Activated CD4-positive, alpha-beta T cell treated with anti-CD3 and anti-CD28 coated beads for 36 hours (primary cell): ENCODE measurements at regions of chr11 and their contacts with region 1.

Region 1: DNA sequence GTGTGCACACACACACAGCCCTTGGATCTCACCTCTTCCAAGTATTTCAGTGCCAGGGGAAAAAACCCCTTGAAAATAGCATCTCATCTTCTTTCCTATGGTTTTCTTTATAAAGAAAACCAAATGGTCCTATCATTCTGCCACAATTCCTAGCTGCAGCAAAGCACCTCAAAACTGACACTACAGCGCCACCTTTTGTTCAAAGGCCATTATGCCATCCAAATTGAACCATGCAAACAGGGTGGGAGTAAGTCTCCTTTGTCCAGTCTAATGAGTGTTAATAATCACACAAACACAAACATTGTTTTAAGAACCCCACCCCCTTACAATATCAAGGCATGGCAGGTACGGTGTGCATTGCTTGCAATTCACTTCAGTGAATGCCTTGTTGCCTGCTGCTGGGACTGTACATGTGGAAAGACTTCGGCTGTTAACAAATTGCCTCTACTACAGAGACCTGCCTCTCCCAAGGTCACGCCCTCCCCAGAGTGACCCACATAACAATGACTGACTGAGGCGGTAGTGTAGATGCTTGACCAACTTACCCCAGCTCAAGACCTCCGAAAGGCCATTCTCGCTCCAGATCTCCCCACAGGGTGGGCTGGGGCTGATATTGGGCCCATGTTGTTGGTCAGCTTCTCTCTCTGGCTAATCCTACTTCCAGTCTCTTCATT is 31.7 kb downstream of the FAM181B start:
- DNase-seq: peak; percentile 42
- ATAC-seq: no peak
- H3K4me3 Mint-ChIP-seq: no peak overlapping the region
- H3K27ac Mint-ChIP-seq: no peak overlapping the region
- H3K4me1 Mint-ChIP-seq: no peaks in the 10 kb centered on the region
- H3K27me3 Mint-ChIP-seq: peaks cover 5% of the 10 kb centered on the region

Region 2: GRCh38 chr11:81644239-81644840 is 1057.6 kb before region 1 on chr11:
- CTCF ChIA-PET with region 1: interaction called, 4 read pairs
- POLR2A ChIA-PET with region 1: no interaction called
- intact Hi-C with region 1: loop called (anchors 5 kb)
- DNase-seq: peak; percentile 28
- ATAC-seq: peak; percentile 63
- H3K4me3 Mint-ChIP-seq: no peak overlapping the region
- H3K27ac Mint-ChIP-seq: no peak overlapping the region
- H3K4me1 Mint-ChIP-seq: no peaks in the 10 kb centered on the region
- H3K27me3 Mint-ChIP-seq: peaks cover 17% of the 10 kb centered on the region

Region 3: GRCh38 chr11:81658722-81659121 is 1043.3 kb before region 1 on chr11:
- CTCF ChIA-PET with region 1: interaction called, 5 read pairs
- POLR2A ChIA-PET with region 1: no interaction called
- intact Hi-C with region 1: loop called in 1 of 2 experiments (anchors 5 kb)
- DNase-seq: peak; percentile 33
- ATAC-seq: peak; percentile 51
- H3K4me3 Mint-ChIP-seq: no peak overlapping the region
- H3K27ac Mint-ChIP-seq: no peak overlapping the region
- H3K4me1 Mint-ChIP-seq: no peaks in the 10 kb centered on the region
- H3K27me3 Mint-ChIP-seq: peaks cover 20% of the 10 kb centered on the region

Region 4: DNA sequence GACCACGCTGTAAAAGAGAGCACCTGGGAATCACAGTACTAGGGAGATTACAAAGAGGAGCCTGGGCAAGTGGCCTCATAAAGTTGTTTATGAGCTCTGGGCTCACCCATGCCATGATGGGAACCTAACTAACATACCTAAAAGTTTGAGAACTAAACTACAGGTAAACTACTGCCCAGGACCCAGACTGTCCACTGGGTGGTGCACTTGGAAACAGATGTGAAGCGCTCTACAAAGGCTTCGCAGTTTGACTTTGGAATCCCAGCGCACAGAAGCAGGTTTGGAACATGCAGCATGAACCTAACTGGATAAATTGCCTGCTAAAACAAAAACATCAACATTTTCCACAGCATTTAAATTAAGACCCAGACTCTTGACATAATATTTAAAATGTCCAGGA is 386.9 kb before region 1 on chr11:
- CTCF ChIA-PET with region 1: no interaction called
- POLR2A ChIA-PET with region 1: no interaction called
- intact Hi-C with region 1: loop called in 1 of 2 experiments (anchors 5 kb)
- DNase-seq: peak; percentile 29
- ATAC-seq: no peak
- H3K4me3 Mint-ChIP-seq: no peak overlapping the region
- H3K27ac Mint-ChIP-seq: no peak overlapping the region
- H3K4me1 Mint-ChIP-seq: no peaks in the 10 kb centered on the region
- H3K27me3 Mint-ChIP-seq: peaks cover 2% of the 10 kb centered on the region

Region 5: DNA sequence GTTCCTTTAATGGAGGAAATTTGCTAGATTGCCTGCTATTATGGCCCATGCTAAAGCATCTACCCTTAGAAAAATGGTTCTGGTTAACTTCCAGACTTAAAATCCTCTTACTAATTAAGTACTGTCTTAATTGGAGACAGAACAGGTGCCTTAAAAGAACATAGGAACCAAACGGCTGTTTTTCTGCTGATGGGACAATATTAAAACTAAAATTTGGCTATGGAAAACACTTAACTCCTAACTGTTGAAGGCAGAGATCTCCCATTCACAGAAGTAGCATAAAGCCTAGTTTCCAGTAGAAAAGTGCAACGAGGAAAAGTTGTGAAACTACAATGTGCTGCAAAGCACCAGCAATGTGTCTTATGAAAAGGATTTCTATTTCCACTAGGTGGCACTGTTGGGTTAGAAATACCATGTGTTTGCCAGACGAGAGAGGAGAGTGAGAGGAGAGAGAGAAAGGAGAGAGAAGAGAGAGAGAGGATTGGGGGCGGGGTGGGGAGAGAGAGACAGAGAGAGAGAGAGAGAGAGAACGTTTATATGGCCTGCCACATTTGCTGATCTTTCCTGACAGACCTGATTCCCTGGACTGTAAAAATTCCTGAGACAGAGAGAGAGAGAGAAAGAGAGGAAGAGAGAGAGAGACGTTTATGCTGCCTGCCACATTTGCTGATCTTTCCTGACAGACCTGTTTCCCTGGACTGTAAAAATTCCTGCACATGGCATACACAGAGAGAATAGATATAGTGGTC is 19.8 kb before region 1 on chr11:
- CTCF ChIA-PET with region 1: interaction called, 21 read pairs
- POLR2A ChIA-PET with region 1: no interaction called
- intact Hi-C with region 1: loop called in 1 of 2 experiments (anchors 1 kb)
- DNase-seq: no peak
- ATAC-seq: peak; percentile 71
- H3K4me3 Mint-ChIP-seq: no peak overlapping the region
- H3K27ac Mint-ChIP-seq: no peak overlapping the region
- H3K4me1 Mint-ChIP-seq: peaks cover 3% of the 10 kb centered on the region
- H3K27me3 Mint-ChIP-seq: peaks cover 20% of the 10 kb centered on the region

Region 6: GRCh38 chr11:82718307-82718706 is 16.3 kb after region 1 on chr11:
- CTCF ChIA-PET with region 1: interaction called, 10 read pairs
- POLR2A ChIA-PET with region 1: no interaction called
- intact Hi-C with region 1: no loop called
- DNase-seq: peak; percentile 41
- ATAC-seq: peak; percentile 55
- H3K4me3 Mint-ChIP-seq: no peak overlapping the region
- H3K27ac Mint-ChIP-seq: no peak overlapping the region
- H3K4me1 Mint-ChIP-seq: no peaks in the 10 kb centered on the region
- H3K27me3 Mint-ChIP-seq: peaks cover under 1% of the 10 kb centered on the region